H1 (cell line): ENCODE measurements at regions of chr6 and their contacts with region 1.

Region 1: DNA sequence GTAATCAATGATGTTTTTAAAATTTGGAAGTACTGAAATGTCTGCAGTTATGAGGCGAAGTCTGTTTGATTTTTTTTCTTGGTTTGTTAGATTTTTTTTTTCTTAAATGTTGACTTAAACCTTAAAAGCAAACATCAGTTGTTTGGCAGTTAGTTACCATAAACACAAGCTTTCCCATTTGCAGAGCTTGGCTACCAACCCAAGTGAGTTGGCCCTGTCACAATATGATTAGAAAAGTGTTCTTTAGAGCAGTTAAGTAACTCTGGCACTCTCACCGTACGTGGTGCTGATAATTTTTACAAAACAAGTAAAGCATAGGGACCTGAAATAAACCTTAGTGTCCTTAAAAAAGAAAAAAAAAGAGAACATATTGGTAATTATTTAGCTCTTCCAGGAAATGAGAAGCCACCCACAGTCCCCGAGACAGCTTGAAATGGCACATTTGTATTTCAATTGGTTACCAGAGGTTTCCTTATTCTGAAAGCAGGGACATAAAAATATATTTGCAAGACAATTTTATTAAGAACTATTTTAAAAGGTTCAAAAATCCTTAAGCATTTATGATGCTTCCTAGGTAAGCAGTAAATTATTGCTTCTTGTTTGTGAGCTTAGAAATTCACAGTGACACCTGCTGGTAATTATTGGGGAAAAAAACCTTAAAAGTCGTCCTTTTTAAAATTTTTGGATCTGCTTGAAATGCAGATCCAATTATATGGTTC is 3.9 kb downstream of the HEY2 start:
- DNase-seq: no peak
- H3K4me3 ChIP-seq: peak overlapping the region in 1 of 4 experiments; percentile 30; a peak in 1 of 8 replicates
- H3K27ac ChIP-seq: no peak overlapping the region
- H3K4me1 ChIP-seq: peaks cover 0 to 14% (median 2%) of the 10 kb centered on the region in 4 experiments; a peak in 4 of 7 replicates
- H3K27me3 ChIP-seq: peaks cover 0 to 10% (median 8%) of the 10 kb centered on the region in 4 experiments; a peak in 6 of 7 replicates
- CTCF ChIP-seq: peak in 1 of 3 experiments; percentile 34; a peak in 1 of 4 replicates
- EP300 ChIP-seq: no peak
- POLR2A ChIP-seq: no peak
- RAD21 ChIP-seq: peak in 1 of 2 experiments; percentile 15; a peak in 2 of 4 replicates

Region 2: GRCh38 chr6:125512621-125513020 is 240.8 kb before region 1 on chr6:
- CTCF ChIA-PET with region 1: interaction called, 12 read pairs
- POLR2A ChIA-PET with region 1: no interaction called
- DNase-seq: no peak
- H3K4me3 ChIP-seq: no peak overlapping the region
- H3K27ac ChIP-seq: no peak overlapping the region
- H3K4me1 ChIP-seq: peaks cover 0 to 4% (median 0%) of the 10 kb centered on the region in 4 experiments; a peak in 2 of 7 replicates
- H3K27me3 ChIP-seq: no peaks in the 10 kb centered on the region
- CTCF ChIP-seq: peak in 2 of 3 experiments; percentile 64 to 69; a peak in 3 of 4 replicates
- EP300 ChIP-seq: no peak
- POLR2A ChIP-seq: no peak
- RAD21 ChIP-seq: peak; percentile 83 to 87

Region 3: GRCh38 chr6:125674230-125674629 is 79.1 kb before region 1 on chr6:
- CTCF ChIA-PET with region 1: interaction called, 17 read pairs
- POLR2A ChIA-PET with region 1: interaction called, 4 read pairs
- DNase-seq: no peak
- H3K4me3 ChIP-seq: no peak overlapping the region
- H3K27ac ChIP-seq: no peak overlapping the region
- H3K4me1 ChIP-seq: peaks cover 0 to 11% (median 8%) of the 10 kb centered on the region in 4 experiments; a peak in 4 of 7 replicates
- H3K27me3 ChIP-seq: no peaks in the 10 kb centered on the region
- CTCF ChIP-seq: no peak
- EP300 ChIP-seq: no peak
- POLR2A ChIP-seq: no peak
- RAD21 ChIP-seq: no peak